PC-3 (cell line): ENCODE measurements at regions of chr10 and their contacts with region 1.

Region 1: GRCh38 chr10:103481974-103482531 is 3.0 kb upstream of the CALHM3 start:
- DNase-seq: peak; percentile 69
- ATAC-seq: peak; percentile 37
- H3K4me3 ChIP-seq: no peak overlapping the region
- H3K27ac ChIP-seq: no peak overlapping the region
- H3K4me1 ChIP-seq: peaks cover 23% of the 10 kb centered on the region
- H3K27me3 ChIP-seq: no peaks in the 10 kb centered on the region
- CTCF ChIP-seq: peak; percentile 72

Region 2: DNA sequence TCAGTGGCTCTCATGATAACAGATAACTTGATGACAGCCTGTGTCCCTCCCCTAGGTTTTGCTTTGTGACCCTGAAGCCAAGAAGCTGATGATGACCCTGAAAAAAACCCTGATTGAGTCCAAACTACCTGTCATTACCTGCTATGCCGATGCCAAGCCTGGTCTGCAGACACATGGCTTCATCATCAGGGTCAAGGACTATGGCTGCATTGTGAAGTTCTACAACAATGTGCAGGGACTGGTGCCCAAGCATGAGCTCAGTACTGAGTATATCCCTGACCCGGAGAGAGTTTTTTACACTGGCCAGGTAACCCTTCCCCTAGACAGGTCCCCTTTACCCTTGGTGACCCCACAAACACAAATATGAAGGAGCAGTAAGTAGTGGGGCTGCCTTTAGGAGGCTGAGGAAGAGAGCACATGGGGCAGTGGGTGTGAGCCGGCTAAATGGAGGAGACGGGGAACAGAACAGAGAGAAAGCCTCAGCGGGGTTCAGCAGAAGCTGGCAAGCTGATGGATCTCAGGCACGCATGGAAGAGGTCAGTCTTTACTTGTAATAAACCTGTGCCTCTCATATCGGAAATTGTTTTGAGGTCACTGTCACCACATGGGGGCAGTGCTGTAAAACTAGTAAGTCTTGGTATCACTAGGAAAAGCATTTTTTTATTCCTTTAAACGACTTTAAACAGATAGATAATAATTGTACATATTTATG is 65.5 kb before region 1 on chr10:
- CTCF ChIA-PET with region 1: interaction called, 9 read pairs
- POLR2A ChIA-PET with region 1: no interaction called
- intact Hi-C with region 1: loop called (anchors 1 kb)
- DNase-seq: peak; percentile 68
- ATAC-seq: peak; percentile 29; the same call in 1 of the 2 replicates
- H3K4me3 ChIP-seq: no peak overlapping the region
- H3K27ac ChIP-seq: no peak overlapping the region
- H3K4me1 ChIP-seq: no peaks in the 10 kb centered on the region
- H3K27me3 ChIP-seq: no peaks in the 10 kb centered on the region
- CTCF ChIP-seq: peak; percentile 66

Region 3: DNA sequence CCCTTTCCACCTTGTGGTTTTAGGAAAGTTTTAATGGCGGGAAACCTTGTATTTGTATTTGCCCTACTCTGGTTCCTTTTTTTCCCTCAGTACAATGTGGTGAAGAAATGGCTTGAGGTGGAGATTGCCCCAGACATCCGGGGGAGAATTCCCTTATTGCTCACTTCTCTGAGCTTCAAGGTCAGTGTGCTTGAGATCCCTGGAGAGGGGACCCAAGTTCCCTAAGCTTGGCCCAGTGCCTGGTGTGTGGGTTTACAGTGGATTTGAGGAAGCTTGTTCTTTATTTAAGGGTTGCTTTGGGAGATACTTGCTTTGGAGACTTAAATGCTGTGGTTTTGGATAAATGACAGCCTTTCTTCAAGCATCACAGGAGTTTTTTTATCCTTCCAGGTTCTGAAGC is 48.2 kb before region 1 on chr10:
- CTCF ChIA-PET with region 1: no interaction called
- POLR2A ChIA-PET with region 1: no interaction called
- intact Hi-C with region 1: loop called (anchors 5 kb)
- DNase-seq: no peak
- ATAC-seq: no peak
- H3K4me3 ChIP-seq: no peak overlapping the region
- H3K27ac ChIP-seq: no peak overlapping the region
- H3K4me1 ChIP-seq: no peaks in the 10 kb centered on the region
- H3K27me3 ChIP-seq: no peaks in the 10 kb centered on the region
- CTCF ChIP-seq: no peak

Region 4: GRCh38 chr10:103451831-103452505 is 30.1 kb before region 1 on chr10 and contains the start of gene CALHM2:
- CTCF ChIA-PET with region 1: no interaction called
- POLR2A ChIA-PET with region 1: no interaction called
- intact Hi-C with region 1: loop called (anchors 2 kb)
- DNase-seq: no peak
- ATAC-seq: 0 out of 2 replicates have a peak, but pooled peaks have one; percentile 20
- H3K4me3 ChIP-seq: peak within 1 kb of the TSS; percentile 21; the same call in 1 of the 2 replicates
- H3K27ac ChIP-seq: peak within 1 kb of the TSS; percentile 79
- H3K4me1 ChIP-seq: peaks cover 23% of the 10 kb centered on the region
- H3K27me3 ChIP-seq: no peaks in the 10 kb centered on the region
- CTCF ChIP-seq: no peak
- total RNA-seq, gene CALHM2: 1.3 and 2.0 TPM in 2 replicates

Region 5: DNA sequence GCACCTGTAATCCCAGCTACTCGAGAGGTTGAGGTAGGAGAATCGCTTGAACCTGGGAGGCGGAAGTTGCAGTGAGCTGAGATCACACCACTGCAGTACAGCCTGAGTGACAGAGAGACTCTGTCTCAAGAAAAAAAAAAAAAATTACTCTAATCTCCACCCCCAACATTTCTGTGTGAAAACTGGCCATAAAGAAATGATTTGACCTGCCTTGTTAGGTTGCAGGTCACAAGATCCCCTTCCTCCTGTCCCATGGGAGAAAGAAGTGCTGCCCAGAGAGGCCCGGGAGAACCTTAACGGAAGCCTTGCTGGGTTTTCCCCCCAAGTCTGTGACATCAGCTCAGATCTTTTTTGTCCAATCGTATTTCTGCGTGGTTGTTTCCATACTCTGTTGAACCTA is 14.6 kb before region 1 on chr10:
- CTCF ChIA-PET with region 1: no interaction called
- POLR2A ChIA-PET with region 1: no interaction called
- intact Hi-C with region 1: no loop called
- DNase-seq: no peak
- ATAC-seq: no peak
- H3K4me3 ChIP-seq: no peak overlapping the region
- H3K27ac ChIP-seq: no peak overlapping the region
- H3K4me1 ChIP-seq: peaks cover 15% of the 10 kb centered on the region
- H3K27me3 ChIP-seq: no peaks in the 10 kb centered on the region
- CTCF ChIP-seq: no peak